ENCODE measurements at regions of chr21 and their contacts with region 1.

Region 1: GRCh38 chr21:26177187-26177586 is 6.6 kb upstream of the APP start:
- DNase-seq: peak in 4 of 5 donors; percentile 29 to 54 (median 31)
- ATAC-seq: peak in 3 of 4 donors; percentile 47 to 90 (median 84)
- H3K4me3 ChIP-seq: no peak overlapping the region
- H3K27ac ChIP-seq: no peak overlapping the region
- H3K4me1 ChIP-seq: peaks cover 0 to 11% (median 0%) of the 10 kb centered on the region in 12 donors
- H3K27me3 ChIP-seq: no peaks in the 10 kb centered on the region
- CTCF ChIP-seq: no peak
- POLR2A ChIP-seq: no peak

Region 2: DNA sequence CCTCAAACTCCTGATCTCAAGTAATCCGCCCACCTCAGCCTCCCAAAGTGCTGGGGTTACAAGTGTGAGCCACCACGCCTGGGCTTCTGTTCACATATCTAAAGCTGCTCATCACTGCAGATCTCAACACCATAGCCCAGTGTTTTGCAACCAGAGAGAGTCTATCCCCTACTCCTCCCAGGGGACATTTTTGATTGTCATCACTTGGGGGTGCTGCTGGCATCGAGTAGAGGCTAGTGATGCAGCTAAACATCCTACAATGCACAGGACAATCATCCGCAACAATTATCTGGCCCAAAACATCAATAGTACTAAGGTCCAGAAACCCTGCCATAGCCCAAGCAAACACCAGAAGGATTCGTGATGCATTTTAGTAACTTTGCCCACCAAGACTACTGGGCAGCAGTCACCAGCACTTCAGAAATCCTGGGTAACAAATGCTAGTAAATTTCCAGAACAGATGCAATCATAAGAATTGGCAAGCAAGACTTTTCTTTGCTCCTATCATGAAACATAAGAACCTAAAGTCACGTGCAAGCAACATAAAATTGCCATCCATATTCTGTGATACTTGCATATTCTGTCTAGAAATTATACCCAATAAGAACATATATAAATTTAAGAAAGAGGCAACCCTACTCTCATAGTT is 165.8 kb before region 1 on chr21:
- intact Hi-C with region 1: no loop called
- DNase-seq: no peak
- ATAC-seq: no peak
- H3K4me3 ChIP-seq: no peak overlapping the region
- H3K27ac ChIP-seq: no peak overlapping the region
- H3K4me1 ChIP-seq: peaks cover 0 to 27% (median 8%) of the 10 kb centered on the region in 12 donors
- H3K27me3 ChIP-seq: no peaks in the 10 kb centered on the region
- CTCF ChIP-seq: no peak
- POLR2A ChIP-seq: no peak

Region 3: GRCh38 chr21:26226724-26227509 is 49.7 kb after region 1 on chr21:
- intact Hi-C with region 1: loop called in 1 of 10 experiments (anchors 5 kb)
- DNase-seq: no peak
- ATAC-seq: no peak
- H3K4me3 ChIP-seq: no peak overlapping the region
- H3K27ac ChIP-seq: no peak overlapping the region
- H3K4me1 ChIP-seq: no peaks in the 10 kb centered on the region
- H3K27me3 ChIP-seq: no peaks in the 10 kb centered on the region
- CTCF ChIP-seq: no peak
- POLR2A ChIP-seq: no peak